CD8-positive, alpha-beta memory T cell (primary cell): ENCODE measurements at regions of chr17 and their contacts with region 1.

Region 1: DNA sequence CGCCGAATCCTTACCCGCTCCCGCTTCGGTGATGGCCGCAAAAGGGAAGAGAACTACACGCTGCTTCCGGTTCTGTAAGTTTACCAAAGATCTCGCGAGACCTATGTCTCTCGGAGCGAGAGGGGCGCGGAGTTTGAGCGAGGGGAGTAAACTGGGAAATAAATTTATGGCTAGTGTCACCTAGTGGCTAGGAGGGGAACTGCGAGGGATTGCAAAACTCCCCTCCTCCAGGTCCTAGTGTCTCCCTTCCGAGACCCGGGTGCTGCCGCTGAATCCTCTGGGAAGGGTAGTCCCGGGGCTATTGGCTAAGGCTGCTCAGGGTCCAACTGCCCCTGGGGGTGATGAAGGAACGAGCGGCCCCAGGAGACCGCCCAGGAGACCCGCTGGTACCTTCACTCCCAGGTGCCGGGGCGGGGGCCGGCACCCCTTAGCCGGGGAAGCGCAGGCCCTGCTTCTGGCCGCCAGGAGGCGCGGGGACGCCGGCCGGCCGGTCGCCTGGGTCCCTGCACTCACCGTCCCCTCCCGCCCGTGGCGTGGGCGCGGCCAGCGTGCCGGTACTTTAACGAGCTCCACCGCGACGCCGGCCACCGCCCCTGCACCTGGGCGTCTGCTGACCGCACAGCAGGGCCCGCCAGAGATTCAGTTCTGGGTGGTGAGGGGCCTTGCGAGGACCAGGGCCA is at the start of gene RPL26:
- DNase-seq: peak; percentile 88 to 98 (median 95)
- H3K4me3 ChIP-seq: peak within 1 kb of the TSS; percentile 90
- H3K4me3 Mint-ChIP-seq: peak within 1 kb of the TSS; percentile 94 to 100 (median 97)
- H3K27ac ChIP-seq: peak within 1 kb of the TSS; percentile 75
- H3K27ac Mint-ChIP-seq: peak within 1 kb of the TSS; percentile 90 to 99 (median 94)
- H3K4me1 ChIP-seq: peaks cover 52% of the 10 kb centered on the region
- H3K4me1 Mint-ChIP-seq: peaks cover 60 to 79% (median 77%) of the 10 kb centered on the region in 3 donors
- H3K27me3 ChIP-seq: no peaks in the 10 kb centered on the region
- H3K27me3 Mint-ChIP-seq: peaks cover 0 to 2% of the 10 kb centered on the region in 2 donors
- total RNA-seq, gene RPL26: 2,453 to 2,522 TPM

Region 2: GRCh38 chr17:8189711-8190477 is 193.4 kb before region 1 on chr17 and contains the start of gene BORCS6:
- CTCF ChIA-PET with region 1: no interaction called
- POLR2A ChIA-PET with region 1: no interaction called
- DNase-seq: peak; percentile 93 to 97 (median 95)
- H3K4me3 ChIP-seq: peak within 1 kb of the TSS; percentile 92
- H3K4me3 Mint-ChIP-seq: peak within 1 kb of the TSS in 1 of 7 donors; percentile 15
- H3K27ac ChIP-seq: peak within 1 kb of the TSS; percentile 81
- H3K27ac Mint-ChIP-seq: peak within 1 kb of the TSS; percentile 46 to 95 (median 88)
- H3K4me1 ChIP-seq: peaks cover 39% of the 10 kb centered on the region
- H3K4me1 Mint-ChIP-seq: peaks cover 12 to 13% (median 12%) of the 10 kb centered on the region in 3 donors
- H3K27me3 ChIP-seq: no peaks in the 10 kb centered on the region
- H3K27me3 Mint-ChIP-seq: peaks cover 0 to 2% of the 10 kb centered on the region in 2 donors
- total RNA-seq, gene BORCS6: 8.1 to 8.8 TPM

Region 3: GRCh38 chr17:8300627-8301242 is 82.5 kb before region 1 on chr17:
- CTCF ChIA-PET with region 1: no interaction called
- POLR2A ChIA-PET with region 1: no interaction called
- DNase-seq: peak; percentile 43 to 79 (median 66)
- H3K4me3 ChIP-seq: no peak overlapping the region
- H3K4me3 Mint-ChIP-seq: peak overlapping the region in 1 of 7 donors; percentile 31
- H3K27ac ChIP-seq: no peak overlapping the region
- H3K27ac Mint-ChIP-seq: peak overlapping the region in 6 of 8 donors; percentile 4 to 86 (median 24)
- H3K4me1 ChIP-seq: peaks cover 10% of the 10 kb centered on the region
- H3K4me1 Mint-ChIP-seq: peaks cover 9 to 12% (median 11%) of the 10 kb centered on the region in 3 donors
- H3K27me3 ChIP-seq: no peaks in the 10 kb centered on the region
- H3K27me3 Mint-ChIP-seq: no peaks in the 10 kb centered on the region

Region 4: GRCh38 chr17:8393420-8394241 is 10.3 kb after region 1 on chr17:
- CTCF ChIA-PET with region 1: interaction called, 21 read pairs
- POLR2A ChIA-PET with region 1: interaction called, 5 read pairs
- DNase-seq: peak in 4 of 5 donors; percentile 33 to 69 (median 58)
- H3K4me3 ChIP-seq: no peak overlapping the region
- H3K4me3 Mint-ChIP-seq: peak overlapping the region in 5 of 7 donors; percentile 34 to 83 (median 64)
- H3K27ac ChIP-seq: peak overlapping the region; percentile 13
- H3K27ac Mint-ChIP-seq: peak overlapping the region; percentile 71 to 100 (median 93)
- H3K4me1 ChIP-seq: peaks cover 15% of the 10 kb centered on the region
- H3K4me1 Mint-ChIP-seq: peaks cover 15 to 27% (median 20%) of the 10 kb centered on the region in 3 donors
- H3K27me3 ChIP-seq: peaks cover 5% of the 10 kb centered on the region
- H3K27me3 Mint-ChIP-seq: peaks cover 8 to 15% of the 10 kb centered on the region in 2 donors

Region 5: GRCh38 chr17:8435245-8436168 is 52.2 kb after region 1 on chr17 and contains the start of gene NDEL1:
- CTCF ChIA-PET with region 1: interaction called, 8 read pairs
- POLR2A ChIA-PET with region 1: interaction called, 11 read pairs
- DNase-seq: peak; percentile 98 to 100 (median 99)
- H3K4me3 ChIP-seq: peak within 1 kb of the TSS; percentile 82
- H3K4me3 Mint-ChIP-seq: peak within 1 kb of the TSS; percentile 92 to 99 (median 97)
- H3K27ac ChIP-seq: peak within 1 kb of the TSS; percentile 98
- H3K27ac Mint-ChIP-seq: peak within 1 kb of the TSS; percentile 96 to 100 (median 99)
- H3K4me1 ChIP-seq: peaks cover 28% of the 10 kb centered on the region
- H3K4me1 Mint-ChIP-seq: peaks cover 29 to 46% (median 42%) of the 10 kb centered on the region in 3 donors
- H3K27me3 ChIP-seq: no peaks in the 10 kb centered on the region
- H3K27me3 Mint-ChIP-seq: no peaks in the 10 kb centered on the region
- total RNA-seq, gene NDEL1: 50.6 to 57.1 TPM

Region 6: DNA sequence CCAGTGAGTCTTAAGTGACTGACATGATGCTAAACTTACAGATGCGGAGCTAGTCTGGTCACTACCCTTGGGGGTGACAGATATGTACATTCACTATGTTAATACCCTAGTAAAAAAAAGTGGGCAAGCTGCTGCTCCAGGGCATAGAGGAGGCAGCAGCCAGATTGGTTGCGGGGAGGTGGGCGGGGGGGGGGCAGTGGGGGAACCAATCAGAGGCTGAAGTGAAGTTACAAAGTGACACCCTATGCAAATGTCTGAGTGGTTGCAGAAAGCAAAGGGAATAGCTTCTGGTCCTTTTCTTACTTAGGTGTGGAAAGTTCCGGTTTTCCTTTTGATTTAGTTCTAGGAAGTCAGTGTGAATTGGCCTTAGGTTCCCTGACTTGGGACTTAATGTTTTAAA is 64.5 kb after region 1 on chr17:
- CTCF ChIA-PET with region 1: no interaction called
- POLR2A ChIA-PET with region 1: no interaction called
- DNase-seq: no peak
- H3K4me3 ChIP-seq: no peak overlapping the region
- H3K4me3 Mint-ChIP-seq: no peak overlapping the region
- H3K27ac ChIP-seq: no peak overlapping the region
- H3K27ac Mint-ChIP-seq: peak overlapping the region in 2 of 8 donors; percentile 10 to 43
- H3K4me1 ChIP-seq: peaks cover 16% of the 10 kb centered on the region
- H3K4me1 Mint-ChIP-seq: peaks cover 22 to 43% (median 32%) of the 10 kb centered on the region in 3 donors
- H3K27me3 ChIP-seq: no peaks in the 10 kb centered on the region
- H3K27me3 Mint-ChIP-seq: no peaks in the 10 kb centered on the region

Region 7: DNA sequence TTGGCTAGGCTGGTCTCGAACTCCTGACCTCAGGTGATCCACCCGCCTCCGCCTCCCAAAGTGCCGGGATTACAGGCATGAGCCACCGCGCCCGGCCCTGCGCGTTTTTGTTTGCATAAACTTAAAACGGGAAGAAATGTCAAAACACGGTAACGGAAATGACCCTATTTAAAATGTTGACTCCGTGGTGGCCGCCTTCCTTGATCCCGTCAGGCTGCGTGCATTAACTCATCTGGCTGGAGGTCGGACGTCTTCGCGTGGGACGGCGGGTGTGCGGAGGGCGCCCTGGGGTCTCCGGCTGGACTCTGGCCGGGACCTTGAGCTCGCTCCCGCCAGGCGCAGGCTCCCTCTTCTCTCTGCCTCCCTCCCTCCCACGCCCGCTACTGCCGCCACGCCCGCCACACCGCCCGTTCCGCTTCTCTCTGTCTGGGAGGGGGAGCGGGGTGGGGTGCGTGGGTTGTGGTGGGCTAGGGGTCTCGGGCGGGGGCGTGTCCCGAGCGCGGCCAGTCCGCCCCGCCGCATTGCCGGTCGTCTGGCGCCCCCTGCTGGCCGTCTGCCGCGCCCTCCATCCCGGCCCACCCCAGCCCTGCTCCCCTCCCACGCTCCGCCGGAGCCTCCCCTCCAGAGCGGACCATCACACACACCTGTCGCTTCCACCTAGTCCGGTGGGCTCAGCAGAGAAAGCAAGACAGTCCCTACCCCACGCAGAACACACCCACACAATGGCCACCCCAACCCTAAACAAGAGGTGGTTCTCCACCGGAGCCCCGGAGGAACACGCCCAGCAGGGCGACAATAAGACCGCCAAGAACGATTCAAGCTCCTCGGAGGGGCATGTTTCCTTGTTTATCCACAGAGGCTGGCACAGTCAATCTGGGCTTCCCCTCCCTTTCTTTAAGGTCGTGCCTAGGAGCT is 362.6 kb after region 1 on chr17:
- CTCF ChIA-PET with region 1: interaction called, 16 read pairs
- POLR2A ChIA-PET with region 1: interaction called, 4 read pairs
- DNase-seq: peak; percentile 70 to 85 (median 77)
- H3K4me3 ChIP-seq: peak overlapping the region; percentile 75
- H3K4me3 Mint-ChIP-seq: peak overlapping the region; percentile 88 to 95 (median 92)
- H3K27ac ChIP-seq: peak overlapping the region; percentile 65
- H3K27ac Mint-ChIP-seq: peak overlapping the region; percentile 91 to 99 (median 94)
- H3K4me1 ChIP-seq: peaks cover 13% of the 10 kb centered on the region
- H3K4me1 Mint-ChIP-seq: peaks cover 9 to 19% (median 12%) of the 10 kb centered on the region in 3 donors
- H3K27me3 ChIP-seq: no peaks in the 10 kb centered on the region
- H3K27me3 Mint-ChIP-seq: peaks cover 0 to 2% of the 10 kb centered on the region in 2 donors

Region 8: DNA sequence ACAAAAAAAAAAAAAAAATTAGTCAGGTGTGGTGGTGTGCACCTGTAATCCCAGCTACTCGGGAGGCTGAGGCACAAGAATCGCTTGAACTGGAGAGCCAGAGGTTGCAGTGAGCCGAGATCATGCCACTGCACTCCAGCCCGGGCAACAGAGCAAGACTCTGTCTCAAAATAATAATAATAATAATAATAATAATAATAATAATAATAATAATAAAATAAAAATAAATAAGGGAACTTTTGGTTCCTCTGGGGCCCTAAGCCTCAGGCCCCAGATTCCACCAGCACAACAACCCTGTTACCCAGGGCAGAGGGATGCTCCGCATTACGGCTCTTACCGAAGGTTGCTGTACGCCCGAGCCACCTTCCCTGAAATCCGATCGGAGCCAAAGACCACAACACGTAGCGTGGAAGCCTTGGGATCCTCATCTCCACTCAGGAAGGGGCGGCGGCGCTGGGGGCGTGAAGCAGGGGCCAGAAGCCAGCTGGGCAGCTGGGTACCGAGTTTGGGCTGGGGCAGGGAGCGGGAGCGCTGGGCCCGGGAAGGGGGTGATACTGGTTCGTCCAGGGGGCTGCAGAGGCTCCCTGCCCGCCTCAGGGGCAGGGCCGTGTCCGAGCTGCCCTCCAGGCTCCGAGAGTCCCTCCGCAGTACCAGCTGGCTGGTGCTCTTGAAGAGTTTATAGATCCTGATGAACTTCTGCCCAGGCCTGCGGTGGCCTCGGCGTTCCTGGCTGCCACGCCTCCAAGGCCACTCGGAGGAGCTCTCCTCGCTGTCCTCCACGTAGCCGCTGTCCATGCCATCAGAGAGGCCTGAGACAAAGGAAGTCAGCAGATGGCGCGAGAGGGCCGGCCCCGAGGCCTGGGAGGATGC is 504.8 kb after region 1 on chr17:
- CTCF ChIA-PET with region 1: no interaction called
- POLR2A ChIA-PET with region 1: no interaction called
- DNase-seq: no peak
- H3K4me3 ChIP-seq: no peak overlapping the region
- H3K4me3 Mint-ChIP-seq: no peak overlapping the region
- H3K27ac ChIP-seq: no peak overlapping the region
- H3K27ac Mint-ChIP-seq: no peak overlapping the region
- H3K4me1 ChIP-seq: no peaks in the 10 kb centered on the region
- H3K4me1 Mint-ChIP-seq: peaks cover 5 to 13% (median 13%) of the 10 kb centered on the region in 3 donors
- H3K27me3 ChIP-seq: no peaks in the 10 kb centered on the region
- H3K27me3 Mint-ChIP-seq: peaks cover 0 to 4% of the 10 kb centered on the region in 2 donors